ENCODE measurements at regions of chr7 and their contacts with region 1.

Region 1: DNA sequence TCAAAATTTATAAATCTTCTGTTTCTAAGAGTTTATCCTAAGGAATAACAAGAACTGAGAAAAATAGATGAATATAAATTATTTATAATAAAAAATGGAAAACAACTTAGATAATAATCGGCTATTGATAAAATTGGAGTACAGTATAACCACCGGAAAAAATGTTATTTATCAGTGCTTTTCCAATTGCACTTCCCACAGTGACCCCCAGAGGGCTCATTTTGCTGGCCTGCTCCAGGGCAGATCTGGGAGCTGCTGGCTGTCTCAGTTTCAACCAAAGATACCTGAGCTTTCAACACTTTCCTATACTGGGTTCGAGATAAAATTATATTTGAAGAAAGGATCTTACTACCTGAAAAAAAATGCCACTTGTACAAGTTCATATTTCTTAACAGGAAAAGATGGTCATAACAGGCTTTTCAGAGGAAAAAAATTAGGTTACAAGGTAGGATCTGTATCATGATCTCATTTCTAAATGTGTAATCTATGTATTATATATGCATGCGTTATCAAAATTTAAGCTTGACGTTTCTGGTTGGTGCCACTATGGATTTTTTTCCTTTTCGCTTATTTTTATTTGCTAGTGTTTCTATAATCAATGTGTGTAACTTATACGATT is 165.7 kb downstream of the NPSR1 start:
- DNase-seq: peak; percentile 41
- ATAC-seq: peak; percentile 77
- H3K4me3 ChIP-seq: no peak overlapping the region
- H3K27ac ChIP-seq: no peak overlapping the region
- H3K4me1 ChIP-seq: peaks cover 8 to 28% of the 10 kb centered on the region in 2 experiments
- H3K27me3 ChIP-seq: no peaks in the 10 kb centered on the region
- CTCF ChIP-seq: peak; percentile 73 to 85 (median 75)
- POLR2A ChIP-seq: no peak
- RAD21 ChIP-seq: peak; percentile 83

Region 2: DNA sequence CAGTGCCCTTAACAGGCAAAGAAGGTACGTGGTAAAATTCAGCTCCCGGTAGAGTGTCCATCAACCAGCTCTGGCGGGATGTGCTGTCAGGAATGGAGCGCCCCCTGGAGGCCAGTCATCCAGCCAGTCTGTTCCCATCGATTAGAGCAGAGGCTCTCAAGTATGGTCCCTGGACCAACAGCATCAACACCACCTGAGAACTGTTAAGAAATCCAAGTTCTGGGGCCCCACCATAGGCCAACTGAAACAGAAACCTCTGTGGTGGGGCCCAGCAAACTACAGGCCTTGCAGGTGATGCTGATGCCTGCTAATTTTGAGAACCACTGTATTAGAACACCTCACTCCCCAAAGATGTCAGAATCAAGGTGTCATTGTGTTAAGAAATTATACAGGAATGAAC is 104.3 kb after region 1 on chr7:
- CTCF ChIA-PET with region 1: interaction called, 12 read pairs
- POLR2A ChIA-PET with region 1: no interaction called
- RAD21 ChIA-PET with region 1: interaction called in 1 of 2 experiments, 3 read pairs
- intact Hi-C with region 1: loop called (anchors 1 kb)
- DNase-seq: peak; percentile 31
- ATAC-seq: peak; percentile 92
- H3K4me3 ChIP-seq: no peak overlapping the region
- H3K27ac ChIP-seq: no peak overlapping the region
- H3K4me1 ChIP-seq: no peaks in the 10 kb centered on the region
- H3K27me3 ChIP-seq: no peaks in the 10 kb centered on the region
- CTCF ChIP-seq: peak; percentile 33 to 85 (median 71); a peak in 5 of 6 replicates
- POLR2A ChIP-seq: no peak
- RAD21 ChIP-seq: peak; percentile 67

Region 3: DNA sequence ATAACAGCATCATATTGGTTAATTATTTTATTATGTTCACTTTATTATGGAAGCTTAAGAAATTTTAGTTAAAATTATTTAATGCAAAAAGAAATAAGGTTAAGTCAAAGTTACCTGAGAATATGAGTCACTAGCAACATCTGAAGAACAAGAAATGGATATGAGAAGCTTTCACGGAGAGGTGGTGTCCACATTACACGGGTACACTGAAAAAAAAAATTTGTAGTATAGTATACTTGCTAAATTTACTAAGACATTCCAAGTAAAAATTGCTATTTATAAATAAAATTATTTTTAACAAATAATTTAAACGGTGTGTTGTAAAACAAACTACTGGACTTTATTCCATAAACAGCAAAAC is 149.6 kb after region 1 on chr7:
- CTCF ChIA-PET with region 1: no interaction called
- POLR2A ChIA-PET with region 1: no interaction called
- RAD21 ChIA-PET with region 1: no interaction called
- intact Hi-C with region 1: no loop called
- DNase-seq: no peak
- ATAC-seq: no peak
- H3K4me3 ChIP-seq: no peak overlapping the region
- H3K27ac ChIP-seq: no peak overlapping the region
- H3K4me1 ChIP-seq: peaks cover 0 to 10% of the 10 kb centered on the region in 2 experiments; a peak in 1 of 4 replicates
- H3K27me3 ChIP-seq: no peaks in the 10 kb centered on the region
- CTCF ChIP-seq: no peak
- POLR2A ChIP-seq: no peak
- RAD21 ChIP-seq: no peak